ENCODE measurements at regions of chr7 and their contacts with region 1.

Region 1: GRCh38 chr7:70014472-70015177 is 416.4 kb downstream of the AUTS2 start:
- DNase-seq: no peak

Region 2: DNA sequence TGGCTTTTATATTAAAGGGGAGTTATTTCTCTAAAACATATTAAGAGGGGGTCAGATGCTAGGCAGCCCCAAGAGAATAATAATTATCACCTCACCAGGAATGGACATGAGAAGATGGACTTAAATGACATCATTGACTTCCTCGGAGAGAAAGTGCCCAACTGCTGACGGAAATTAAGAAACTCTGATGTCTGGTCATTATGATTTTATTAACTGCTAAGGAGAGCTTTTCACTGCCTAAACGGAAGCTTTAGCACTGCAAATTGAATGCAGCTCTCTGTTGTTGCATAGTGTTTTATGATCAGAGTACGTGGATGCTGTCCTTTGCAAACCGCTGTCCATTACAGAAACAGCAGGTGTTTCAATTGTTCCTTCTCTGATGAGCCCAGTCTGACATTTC is 1027.9 kb after region 1 on chr7:
- intact Hi-C with region 1: loop called in 1 of 2 experiments (anchors 5 kb)
- DNase-seq: no peak

Measured in posterior vena cava (tissue), 2 donors.